Caco-2 (cell line): ENCODE measurements at regions of chr5 and their contacts with region 1.

Region 1: DNA sequence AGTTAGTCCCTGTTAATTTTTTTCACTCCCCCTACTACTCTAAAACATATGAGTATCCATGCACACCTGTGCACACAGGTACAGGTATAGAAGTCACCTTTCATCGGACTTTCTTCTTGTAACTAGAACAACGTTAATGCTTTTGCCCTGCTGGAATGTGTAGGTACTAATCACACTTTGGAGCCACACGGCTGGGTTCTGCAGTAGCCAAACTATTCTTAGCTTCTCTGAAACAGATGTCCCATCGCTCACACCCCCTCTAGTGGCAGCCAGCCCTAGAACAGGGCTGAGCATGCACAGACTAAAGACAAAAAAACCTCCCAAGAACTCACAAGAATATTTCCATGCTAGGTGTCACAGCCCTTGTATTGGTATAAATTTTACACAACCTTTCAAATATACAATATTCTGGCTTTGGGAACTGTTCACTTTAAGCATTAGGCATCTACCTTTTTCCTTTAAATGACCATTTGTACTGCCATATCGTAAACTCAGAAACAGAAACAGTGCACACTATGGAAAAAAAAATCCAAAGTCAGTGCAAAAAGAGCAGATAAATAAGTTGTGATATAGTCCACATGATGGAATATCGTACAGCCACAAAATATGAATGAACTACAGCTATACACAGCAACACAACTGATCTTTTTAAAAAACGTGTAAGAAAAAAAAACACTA is 64.0 kb downstream of the RETREG1 start:
- DNase-seq: peak; percentile 88 to 89
- H3K4me3 ChIP-seq: no peak overlapping the region
- H3K4me3 Mint-ChIP-seq: no peak overlapping the region
- H3K27ac Mint-ChIP-seq: peak overlapping the region; percentile 61
- H3K4me1 ChIP-seq: peaks cover 24% of the 10 kb centered on the region
- H3K4me1 Mint-ChIP-seq: peaks cover 24% of the 10 kb centered on the region
- H3K27me3 ChIP-seq: no peaks in the 10 kb centered on the region
- H3K27me3 Mint-ChIP-seq: no peaks in the 10 kb centered on the region
- CTCF ChIP-seq: peak; percentile 87 to 97

Region 2: DNA sequence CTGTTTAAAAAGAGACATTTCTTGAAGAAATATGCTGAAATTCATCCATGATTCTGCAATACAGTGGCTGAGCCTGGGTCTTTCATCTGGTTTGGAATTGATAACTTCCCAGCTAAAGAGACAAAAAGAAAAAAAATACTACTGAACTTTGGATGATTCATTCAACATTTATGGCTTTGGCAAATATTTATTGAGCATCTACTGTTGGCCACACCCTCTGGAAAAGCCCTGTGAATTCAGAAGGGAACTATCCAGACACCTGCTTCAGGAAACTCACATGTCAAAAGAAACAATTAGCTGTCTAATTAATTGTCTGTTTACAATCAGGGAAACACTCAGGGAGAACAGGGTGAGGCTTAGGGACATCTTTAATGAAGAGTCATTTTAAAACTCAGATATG is 69.4 kb before region 1 on chr5:
- CTCF ChIA-PET with region 1: interaction called, 12 read pairs
- POLR2A ChIA-PET with region 1: no interaction called
- intact Hi-C with region 1: no loop called
- DNase-seq: peak; percentile 60 to 66
- H3K4me3 ChIP-seq: no peak overlapping the region
- H3K4me3 Mint-ChIP-seq: peak overlapping the region; percentile 42
- H3K27ac Mint-ChIP-seq: peak overlapping the region; percentile 34
- H3K4me1 ChIP-seq: peaks cover 70% of the 10 kb centered on the region
- H3K4me1 Mint-ChIP-seq: peaks cover 51% of the 10 kb centered on the region
- H3K27me3 ChIP-seq: no peaks in the 10 kb centered on the region
- H3K27me3 Mint-ChIP-seq: no peaks in the 10 kb centered on the region
- CTCF ChIP-seq: no peak

Region 3: GRCh38 chr5:16508730-16509531 is 43.9 kb before region 1 on chr5:
- CTCF ChIA-PET with region 1: interaction called, 4 read pairs
- POLR2A ChIA-PET with region 1: no interaction called
- intact Hi-C with region 1: loop called (anchors 1 kb)
- DNase-seq: peak; percentile 56 to 60
- H3K4me3 ChIP-seq: no peak overlapping the region
- H3K4me3 Mint-ChIP-seq: peak overlapping the region; percentile 46
- H3K27ac Mint-ChIP-seq: peak overlapping the region; percentile 59
- H3K4me1 ChIP-seq: peaks cover 31% of the 10 kb centered on the region
- H3K4me1 Mint-ChIP-seq: peaks cover 29% of the 10 kb centered on the region
- H3K27me3 ChIP-seq: no peaks in the 10 kb centered on the region
- H3K27me3 Mint-ChIP-seq: no peaks in the 10 kb centered on the region
- CTCF ChIP-seq: no peak

Region 4: GRCh38 chr5:16616536-16617273 is 63.9 kb after region 1 on chr5 and contains the start of gene RETREG1:
- CTCF ChIA-PET with region 1: no interaction called
- POLR2A ChIA-PET with region 1: no interaction called
- intact Hi-C with region 1: loop called (anchors 2 kb)
- DNase-seq: peak; percentile 51 to 79
- H3K4me3 ChIP-seq: peak within 1 kb of the TSS; percentile 84
- H3K4me3 Mint-ChIP-seq: no peak within 1 kb of the TSS
- H3K27ac Mint-ChIP-seq: peak within 1 kb of the TSS; percentile 43
- H3K4me1 ChIP-seq: no peaks in the 10 kb centered on the region
- H3K4me1 Mint-ChIP-seq: no peaks in the 10 kb centered on the region
- H3K27me3 ChIP-seq: no peaks in the 10 kb centered on the region
- H3K27me3 Mint-ChIP-seq: no peaks in the 10 kb centered on the region
- CTCF ChIP-seq: no peak
- total RNA-seq, gene RETREG1: 14.1 and 15.1 TPM in 2 replicates